CD4-positive, alpha-beta memory T cell (primary cell): ENCODE measurements at regions of chr12 and their contacts with region 1.

Region 1: GRCh38 chr12:91382081-91382543 is 199.5 kb upstream of the DCN start:
- DNase-seq: peak; percentile 72 to 79 (median 78)
- H3K4me3 ChIP-seq: no peak overlapping the region
- H3K4me3 Mint-ChIP-seq: peak overlapping the region; percentile 46 to 79 (median 63)
- H3K27ac ChIP-seq: no peak overlapping the region
- H3K27ac Mint-ChIP-seq: peak overlapping the region in 2 of 7 donors; percentile 23 to 31
- H3K4me1 ChIP-seq: peaks cover 7% of the 10 kb centered on the region
- H3K4me1 Mint-ChIP-seq: peaks cover 2 to 5% (median 5%) of the 10 kb centered on the region in 4 donors
- H3K27me3 ChIP-seq: no peaks in the 10 kb centered on the region
- H3K27me3 Mint-ChIP-seq: peaks cover 3 to 6% of the 10 kb centered on the region in 2 donors

Region 2: DNA sequence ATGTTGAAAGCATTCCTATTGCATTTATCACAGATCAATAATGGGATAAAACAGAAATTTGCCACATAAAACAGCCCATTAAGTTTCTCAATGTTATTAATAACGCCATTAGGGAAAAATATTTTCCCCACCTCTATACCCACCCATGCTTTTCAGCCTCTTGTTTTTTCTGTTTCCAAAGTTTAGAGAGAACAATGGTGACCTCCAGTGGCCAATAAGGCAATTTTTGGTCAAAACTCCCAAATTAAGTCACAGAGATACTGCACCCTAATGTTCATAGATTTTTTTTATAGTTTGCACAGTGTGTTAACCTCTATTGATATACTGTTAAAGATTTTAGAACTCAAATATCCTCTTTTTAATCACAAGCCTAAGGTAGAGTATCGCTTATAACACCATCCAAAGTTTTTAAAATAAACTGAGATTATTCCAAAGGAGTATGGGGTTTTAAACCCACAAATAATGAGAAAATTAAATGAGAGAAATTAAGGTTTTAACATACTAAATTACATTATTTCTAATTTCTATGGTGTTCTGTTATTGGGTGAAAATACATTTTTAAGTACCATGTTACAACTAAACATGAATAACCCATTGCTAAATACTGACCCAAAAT is 14.8 kb before region 1 on chr12:
- CTCF ChIA-PET with region 1: interaction called, 20 read pairs
- POLR2A ChIA-PET with region 1: no interaction called
- intact Hi-C with region 1: no loop called
- DNase-seq: no peak
- H3K4me3 ChIP-seq: no peak overlapping the region
- H3K4me3 Mint-ChIP-seq: no peak overlapping the region
- H3K27ac ChIP-seq: no peak overlapping the region
- H3K27ac Mint-ChIP-seq: no peak overlapping the region
- H3K4me1 ChIP-seq: no peaks in the 10 kb centered on the region
- H3K4me1 Mint-ChIP-seq: no peaks in the 10 kb centered on the region
- H3K27me3 ChIP-seq: no peaks in the 10 kb centered on the region
- H3K27me3 Mint-ChIP-seq: peaks cover 2% of the 10 kb centered on the region in 2 donors

Region 3: DNA sequence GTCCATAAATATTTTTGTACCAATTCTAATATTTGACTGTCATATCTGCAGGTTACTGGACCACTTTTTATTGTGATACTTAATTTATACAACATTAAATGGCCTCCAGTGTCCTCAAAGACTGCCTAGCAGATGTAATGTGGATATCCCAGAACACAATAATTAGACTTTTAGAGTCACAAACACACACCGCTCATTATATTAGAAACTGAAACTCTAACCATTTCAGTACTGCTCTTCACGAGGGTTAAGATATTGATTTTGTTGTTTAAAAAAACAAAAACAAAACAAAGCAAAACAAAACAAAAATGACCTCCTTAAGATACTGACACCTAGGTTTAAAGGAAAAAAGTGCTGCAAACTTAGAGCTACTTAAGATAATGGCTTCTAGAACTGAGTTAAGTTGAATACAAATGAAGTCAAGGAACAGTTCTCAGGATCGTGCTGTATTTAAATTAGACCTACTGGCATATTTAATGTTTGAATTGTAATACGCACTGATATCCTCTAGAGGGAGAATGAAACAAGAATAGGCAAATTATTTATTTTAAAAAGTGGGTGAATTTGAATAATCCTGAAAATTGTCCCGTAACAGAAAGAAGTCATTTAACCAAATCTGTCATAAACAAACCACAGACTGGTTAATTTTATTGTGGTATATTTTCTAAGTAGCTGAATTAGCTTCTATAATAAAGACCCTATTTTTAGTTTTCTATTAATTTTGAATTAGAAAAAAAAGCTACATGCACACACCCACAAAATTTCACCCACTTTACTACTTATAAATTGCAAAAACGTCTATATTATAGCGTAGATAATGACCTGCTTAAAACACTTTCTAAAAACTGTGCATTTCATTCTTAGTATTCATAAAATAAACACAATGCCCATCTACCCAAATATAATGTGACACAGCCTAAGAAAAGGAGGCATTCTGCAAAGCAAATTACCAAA is 195.8 kb after region 1 on chr12:
- CTCF ChIA-PET with region 1: interaction called, 4 read pairs
- POLR2A ChIA-PET with region 1: no interaction called
- intact Hi-C with region 1: loop called (anchors 1 kb)
- DNase-seq: peak in 4 of 5 donors; percentile 33 to 44 (median 42)
- H3K4me3 ChIP-seq: peak overlapping the region; percentile 18 to 50
- H3K4me3 Mint-ChIP-seq: peak overlapping the region; percentile 77 to 91 (median 84)
- H3K27ac ChIP-seq: no peak overlapping the region
- H3K27ac Mint-ChIP-seq: peak overlapping the region in 5 of 7 donors; percentile 33 to 91 (median 77)
- H3K4me1 ChIP-seq: peaks cover 4% of the 10 kb centered on the region
- H3K4me1 Mint-ChIP-seq: peaks cover 4 to 9% (median 5%) of the 10 kb centered on the region in 4 donors
- H3K27me3 ChIP-seq: no peaks in the 10 kb centered on the region
- H3K27me3 Mint-ChIP-seq: peaks cover 1 to 3% of the 10 kb centered on the region in 2 donors

Region 4: GRCh38 chr12:91687052-91688017 is 305.2 kb after region 1 on chr12:
- CTCF ChIA-PET with region 1: no interaction called
- POLR2A ChIA-PET with region 1: no interaction called
- intact Hi-C with region 1: no loop called
- DNase-seq: peak; percentile 52 to 69 (median 60)
- H3K4me3 ChIP-seq: no peak overlapping the region
- H3K4me3 Mint-ChIP-seq: peak overlapping the region in 3 of 8 donors; percentile 4 to 20 (median 9)
- H3K27ac ChIP-seq: no peak overlapping the region
- H3K27ac Mint-ChIP-seq: peak overlapping the region in 5 of 7 donors; percentile 3 to 78 (median 31)
- H3K4me1 ChIP-seq: peaks cover 16% of the 10 kb centered on the region
- H3K4me1 Mint-ChIP-seq: peaks cover 9 to 13% (median 11%) of the 10 kb centered on the region in 4 donors
- H3K27me3 ChIP-seq: no peaks in the 10 kb centered on the region
- H3K27me3 Mint-ChIP-seq: no peaks in the 10 kb centered on the region

Region 5: DNA sequence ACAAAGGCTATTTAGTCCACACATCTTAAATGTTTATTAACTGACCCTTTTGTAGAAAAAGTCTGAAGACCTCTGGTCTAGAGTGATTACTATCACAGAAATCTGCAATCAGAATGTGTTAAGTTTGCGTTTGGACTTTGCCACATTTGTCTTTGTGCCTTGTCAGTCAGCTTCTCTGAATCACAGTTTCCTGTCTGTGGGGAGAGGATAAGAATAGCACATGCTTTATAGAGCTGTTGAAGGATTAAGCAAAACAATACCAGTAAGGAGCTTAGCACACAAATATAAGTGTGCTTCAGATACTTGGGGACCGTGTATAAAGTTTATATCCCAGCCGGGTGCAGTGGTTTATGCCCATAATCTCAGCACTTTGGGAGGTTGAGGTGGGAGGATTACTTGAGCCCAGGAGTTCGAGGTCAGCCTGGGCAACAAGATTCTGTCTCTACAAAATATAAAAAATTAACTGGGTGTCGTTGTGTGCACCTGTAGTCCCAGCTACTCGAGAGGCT is 826.6 kb after region 1 on chr12:
- CTCF ChIA-PET with region 1: interaction called, 3 read pairs
- POLR2A ChIA-PET with region 1: no interaction called
- intact Hi-C with region 1: loop called (anchors 5 kb)
- DNase-seq: peak; percentile 61 to 78 (median 66)
- H3K4me3 ChIP-seq: peak overlapping the region in 1 of 2 donors; percentile 30
- H3K4me3 Mint-ChIP-seq: peak overlapping the region; percentile 63 to 88 (median 81)
- H3K27ac ChIP-seq: peak overlapping the region; percentile 19
- H3K27ac Mint-ChIP-seq: peak overlapping the region; percentile 77 to 95 (median 86)
- H3K4me1 ChIP-seq: peaks cover 31% of the 10 kb centered on the region
- H3K4me1 Mint-ChIP-seq: peaks cover 26 to 42% (median 35%) of the 10 kb centered on the region in 4 donors
- H3K27me3 ChIP-seq: no peaks in the 10 kb centered on the region
- H3K27me3 Mint-ChIP-seq: no peaks in the 10 kb centered on the region

Region 6: GRCh38 chr12:92649511-92650227 is 1267.6 kb after region 1 on chr12:
- CTCF ChIA-PET with region 1: interaction called, 65 read pairs
- POLR2A ChIA-PET with region 1: interaction called, 3 read pairs
- intact Hi-C with region 1: loop called (anchors 1 kb)
- DNase-seq: peak; percentile 55 to 68 (median 59)
- H3K4me3 ChIP-seq: no peak overlapping the region
- H3K4me3 Mint-ChIP-seq: no peak overlapping the region
- H3K27ac ChIP-seq: no peak overlapping the region
- H3K27ac Mint-ChIP-seq: peak overlapping the region in 5 of 7 donors; percentile 31 to 74 (median 46)
- H3K4me1 ChIP-seq: no peaks in the 10 kb centered on the region
- H3K4me1 Mint-ChIP-seq: peaks cover 0 to 6% (median 4%) of the 10 kb centered on the region in 4 donors
- H3K27me3 ChIP-seq: no peaks in the 10 kb centered on the region
- H3K27me3 Mint-ChIP-seq: peaks cover 0 to 2% of the 10 kb centered on the region in 2 donors